ENCODE measurements at regions of chr1 and their contacts with region 1.

Region 1: DNA sequence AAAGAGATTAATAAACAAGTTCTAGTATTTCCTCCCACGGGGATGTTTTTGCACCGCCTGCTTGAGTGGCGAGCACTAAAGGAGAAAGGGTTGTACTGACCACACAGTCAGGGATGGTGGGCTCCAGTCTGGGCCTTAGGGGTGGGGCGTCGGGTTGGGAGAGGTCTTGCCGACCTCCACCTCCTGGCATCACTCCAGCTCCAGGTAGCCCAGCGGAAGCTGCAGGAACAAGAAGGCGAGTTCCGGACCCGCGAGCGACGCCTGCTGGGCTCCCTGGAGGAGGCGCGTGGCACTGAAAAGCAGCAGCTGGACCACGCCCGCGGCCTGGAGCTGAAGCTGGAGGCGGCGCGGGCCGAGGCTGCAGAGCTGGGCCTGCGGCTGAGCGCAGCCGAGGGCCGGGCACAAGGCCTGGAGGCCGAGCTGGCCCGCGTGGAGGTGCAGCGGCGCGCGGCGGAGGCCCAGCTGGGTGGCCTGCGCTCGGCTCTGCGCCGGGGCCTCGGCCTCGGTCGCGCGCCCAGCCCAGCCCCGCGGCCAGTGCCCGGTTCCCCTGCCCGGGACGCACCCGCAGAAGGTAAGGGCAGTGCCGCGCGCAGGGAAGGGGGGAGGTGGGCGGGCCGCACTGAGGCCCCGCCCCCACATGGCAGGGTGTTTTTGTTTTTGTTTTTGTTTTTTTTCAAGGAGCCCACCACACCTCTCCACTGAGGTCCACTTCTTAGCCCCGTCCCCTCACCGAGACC is 19.7 kb downstream of the MFAP2 start:
- DNase-seq: peak; percentile 76
- H3K4me3 Mint-ChIP-seq: peak overlapping the region; percentile 69
- H3K27ac Mint-ChIP-seq: no peak overlapping the region
- H3K4me1 Mint-ChIP-seq: peaks cover 9% of the 10 kb centered on the region
- H3K27me3 Mint-ChIP-seq: no peaks in the 10 kb centered on the region

Region 2: GRCh38 chr1:17011439-17012307 is 50.9 kb after region 1 on chr1 and contains the start of gene ATP13A2:
- intact Hi-C with region 1: loop called (anchors 10 kb)
- DNase-seq: peak; percentile 77
- H3K4me3 Mint-ChIP-seq: peak within 1 kb of the TSS; percentile 80
- H3K27ac Mint-ChIP-seq: no peak within 1 kb of the TSS
- H3K4me1 Mint-ChIP-seq: peaks cover 17% of the 10 kb centered on the region
- H3K27me3 Mint-ChIP-seq: no peaks in the 10 kb centered on the region
- total RNA-seq, gene ATP13A2: 47.6 and 50.2 TPM in 2 replicates